ENCODE measurements at regions of chr17 and their contacts with region 1.

Region 1: GRCh38 chr17:61837175-61838051 is 25.9 kb downstream of the BRIP1 start:
- DNase-seq: peak; percentile 21 to 51
- ATAC-seq: peak in 2 of 4 donors; percentile 58 to 72
- H3K4me3 ChIP-seq: no peak overlapping the region
- H3K27ac ChIP-seq: no peak overlapping the region
- H3K4me1 ChIP-seq: no peaks in the 10 kb centered on the region
- H3K27me3 ChIP-seq: no peaks in the 10 kb centered on the region
- CTCF ChIP-seq: peak; percentile 67

Region 2: GRCh38 chr17:61570118-61570517 is 267.3 kb before region 1 on chr17:
- intact Hi-C with region 1: no loop called
- DNase-seq: no peak
- ATAC-seq: no peak
- H3K4me3 ChIP-seq: no peak overlapping the region
- H3K27ac ChIP-seq: no peak overlapping the region
- H3K4me1 ChIP-seq: no peaks in the 10 kb centered on the region
- H3K27me3 ChIP-seq: peaks cover 0 to 4% (median 0%) of the 10 kb centered on the region in 3 donors
- CTCF ChIP-seq: no peak

Region 3: GRCh38 chr17:61635913-61636432 is 201.4 kb before region 1 on chr17:
- intact Hi-C with region 1: loop called in 1 of 2 experiments (anchors 10 kb)
- DNase-seq: no peak
- ATAC-seq: no peak
- H3K4me3 ChIP-seq: no peak overlapping the region
- H3K27ac ChIP-seq: no peak overlapping the region
- H3K4me1 ChIP-seq: no peaks in the 10 kb centered on the region
- H3K27me3 ChIP-seq: no peaks in the 10 kb centered on the region
- CTCF ChIP-seq: peak; percentile 26

Region 4: GRCh38 chr17:61783556-61784304 is 53.7 kb before region 1 on chr17:
- intact Hi-C with region 1: no loop called
- DNase-seq: no peak
- ATAC-seq: no peak
- H3K4me3 ChIP-seq: no peak overlapping the region
- H3K27ac ChIP-seq: no peak overlapping the region
- H3K4me1 ChIP-seq: no peaks in the 10 kb centered on the region
- H3K27me3 ChIP-seq: no peaks in the 10 kb centered on the region
- CTCF ChIP-seq: no peak

Region 5: GRCh38 chr17:61862975-61863800 is 25.8 kb after region 1 on chr17 and contains the start of gene BRIP1:
- intact Hi-C with region 1: no loop called
- DNase-seq: peak; percentile 90 to 93
- ATAC-seq: peak; percentile 98 to 100 (median 100)
- H3K4me3 ChIP-seq: peak within 1 kb of the TSS; percentile 82
- H3K27ac ChIP-seq: peak within 1 kb of the TSS; percentile 70
- H3K4me1 ChIP-seq: peaks cover 9% of the 10 kb centered on the region
- H3K27me3 ChIP-seq: no peaks in the 10 kb centered on the region
- CTCF ChIP-seq: no peak
- total RNA-seq, gene BRIP1: 0.06 to 0.40 (median 0.19) TPM